HEK293T (cell line): ENCODE measurements at regions of chrX and their contacts with region 1.

Region 1: DNA sequence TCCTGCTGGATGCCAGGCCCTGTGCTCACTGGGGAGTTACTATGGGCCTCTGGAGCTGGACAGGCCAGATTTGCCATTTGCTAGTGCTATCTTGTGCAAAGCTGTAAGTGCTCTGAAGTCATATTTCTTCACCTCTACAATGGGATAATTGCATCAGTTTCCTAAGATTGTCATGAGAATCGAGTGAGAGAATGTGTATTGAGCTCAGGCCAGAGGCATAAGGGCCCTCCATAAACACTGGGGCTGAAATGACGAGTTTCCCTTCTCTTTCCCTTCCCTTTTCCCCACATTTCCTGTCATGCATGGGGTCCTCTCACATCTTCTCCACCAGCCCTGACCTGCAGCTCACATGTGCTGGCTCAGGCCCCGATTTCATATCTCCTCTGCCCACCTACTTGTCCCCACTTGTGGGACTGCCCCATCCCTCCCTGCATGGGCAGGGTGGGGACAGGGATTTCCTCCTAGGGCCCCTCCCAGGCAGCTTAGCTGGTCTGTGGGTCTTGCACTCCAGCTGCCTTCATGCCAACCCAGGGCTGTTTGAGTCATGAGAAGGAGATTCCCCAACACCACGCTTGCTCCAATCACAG is 358.8 kb downstream of the MID1IP1 start:
- DNase-seq: no peak

Region 2: GRCh38 chrX:38282044-38282443 is 878.0 kb before region 1 on chrX:
- CTCF ChIA-PET with region 1: no interaction called
- POLR2A ChIA-PET with region 1: no interaction called
- DNase-seq: peak; percentile 16

Region 3: DNA sequence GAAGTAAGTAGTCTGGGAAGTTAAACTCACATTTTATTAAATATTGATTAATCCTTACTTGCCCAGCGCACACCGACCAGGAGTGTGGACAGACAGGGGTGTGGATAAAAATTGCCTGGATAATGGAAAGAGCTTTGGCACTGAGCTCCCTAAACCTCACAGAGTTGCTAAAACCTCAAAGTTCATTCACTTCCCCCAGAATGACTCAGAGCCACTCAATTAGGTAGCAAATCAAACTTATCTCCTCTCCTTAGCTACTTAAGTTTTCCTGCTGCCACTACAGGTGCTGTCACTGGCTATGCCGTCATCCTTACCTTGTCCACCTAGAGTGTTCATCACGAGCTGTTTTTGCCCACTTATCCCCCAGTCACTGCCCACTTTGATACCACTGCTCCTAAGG is 385.8 kb before region 1 on chrX:
- CTCF ChIA-PET with region 1: interaction called, 11 read pairs
- POLR2A ChIA-PET with region 1: no interaction called
- DNase-seq: no peak